ENCODE measurements at regions of chr5 and their contacts with region 1.

Region 1: DNA sequence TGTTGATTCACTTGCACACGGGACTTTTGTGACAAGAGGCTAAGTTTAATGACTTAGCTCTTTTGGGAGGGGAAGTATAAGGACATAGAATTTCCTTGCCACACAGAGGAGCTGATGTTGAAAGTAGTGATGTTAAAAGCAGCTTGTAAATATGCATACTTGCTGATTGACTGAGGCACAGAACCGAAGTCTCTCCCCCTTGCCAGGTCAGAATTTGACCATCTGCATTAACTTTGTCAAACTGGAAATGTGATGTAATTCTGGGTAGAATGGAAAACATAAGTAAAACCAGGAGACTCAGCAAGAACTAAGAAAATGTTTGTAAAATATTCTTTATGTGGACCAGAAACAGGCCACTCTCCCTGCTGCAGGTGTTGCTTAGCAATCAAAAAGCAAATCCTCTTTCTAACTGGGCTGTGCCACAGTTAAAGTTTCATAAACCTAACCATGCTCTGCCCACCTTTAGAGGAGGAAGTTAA is 284.2 kb downstream of the NR3C1 start:
- DNase-seq: no peak
- CTCF ChIP-seq: no peak

Region 2: GRCh38 chr5:142492781-142493281 is 626.5 kb before region 1 on chr5:
- CTCF ChIA-PET with region 1: no interaction called
- POLR2A ChIA-PET with region 1: no interaction called
- DNase-seq: no peak
- CTCF ChIP-seq: no peak

Region 3: DNA sequence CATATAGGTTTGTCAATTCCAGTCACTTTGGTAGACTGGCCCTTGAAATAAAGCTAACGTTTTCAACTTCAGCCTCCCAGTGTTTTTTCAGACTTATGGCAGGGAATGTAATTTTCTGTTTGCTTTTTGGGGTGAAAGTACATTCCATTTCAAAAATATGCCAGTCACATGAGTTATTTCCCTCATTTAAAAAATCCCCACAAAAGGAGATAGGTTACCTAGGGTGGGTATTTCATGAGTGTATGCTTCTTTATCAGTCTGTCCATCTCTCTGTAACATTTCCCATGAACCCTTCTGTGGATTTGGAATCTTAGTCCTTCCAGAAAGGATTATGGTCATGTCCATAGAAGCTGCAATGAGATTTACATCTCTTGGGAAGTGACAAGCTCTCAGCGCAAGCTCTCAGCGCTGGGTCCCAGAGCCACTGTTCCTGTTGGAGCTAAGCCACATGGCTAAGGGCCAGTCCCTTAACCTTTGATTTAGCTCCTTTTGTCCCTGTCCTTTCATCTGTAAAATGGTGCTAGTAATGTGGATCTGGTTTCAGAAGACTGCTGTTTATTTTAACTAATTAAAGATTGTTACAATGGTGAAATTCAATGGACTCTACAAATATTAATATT is 10.7 kb before region 1 on chr5:
- CTCF ChIA-PET with region 1: interaction called, 170 read pairs
- POLR2A ChIA-PET with region 1: no interaction called
- DNase-seq: no peak
- CTCF ChIP-seq: no peak

Region 4: GRCh38 chr5:143134900-143135299 is 15.6 kb after region 1 on chr5:
- CTCF ChIA-PET with region 1: interaction called, 170 read pairs
- POLR2A ChIA-PET with region 1: no interaction called
- DNase-seq: no peak
- CTCF ChIP-seq: no peak